ENCODE measurements at regions of chr22 and their contacts with region 1.

Region 1: DNA sequence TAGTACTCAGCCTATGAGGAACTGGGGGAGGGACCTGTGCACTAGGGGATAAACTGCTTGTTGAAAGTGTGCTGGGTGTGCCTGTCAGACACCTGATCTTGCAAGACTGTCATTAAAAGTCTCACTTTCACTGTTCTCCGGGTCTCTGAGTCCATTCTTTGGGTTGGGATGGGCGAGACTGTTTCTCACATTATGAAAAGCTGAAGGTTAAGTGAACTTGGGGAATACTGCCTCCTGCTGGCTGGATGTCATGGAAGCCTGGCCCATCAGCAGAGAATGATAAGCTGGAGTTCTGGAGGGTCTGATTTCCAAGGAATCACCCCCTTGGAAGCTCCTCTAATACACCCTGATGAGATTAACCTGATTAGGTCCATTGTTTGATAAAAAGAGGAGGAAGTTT is 9.0 kb upstream of the VPREB1 start:
- DNase-seq: peak; percentile 17
- ATAC-seq: peak; percentile 48; the same call in 2 of the 3 replicates
- H3K4me3 ChIP-seq: no peak overlapping the region
- H3K27ac ChIP-seq: no peak overlapping the region
- H3K4me1 ChIP-seq: no peaks in the 10 kb centered on the region
- H3K27me3 ChIP-seq: no peaks in the 10 kb centered on the region
- CTCF ChIP-seq: peak; percentile 51 to 55 (median 52); a peak in 5 of 6 replicates
- EP300 ChIP-seq: no peak
- POLR2A ChIP-seq: no peak
- RAD21 ChIP-seq: peak; percentile 62

Region 2: GRCh38 chr22:22201185-22201929 is 34.2 kb before region 1 on chr22:
- CTCF ChIA-PET with region 1: interaction called, 20 read pairs
- POLR2A ChIA-PET with region 1: no interaction called
- RAD21 ChIA-PET with region 1: interaction called, 12 read pairs
- SMC1A ChIA-PET with region 1: interaction called, 13 read pairs
- in situ Hi-C with region 1: no loop called
- intact Hi-C with region 1: no loop called
- DNase-seq: no peak
- ATAC-seq: peak; percentile 70
- H3K4me3 ChIP-seq: no peak overlapping the region
- H3K27ac ChIP-seq: no peak overlapping the region
- H3K4me1 ChIP-seq: peaks cover 14% of the 10 kb centered on the region
- H3K27me3 ChIP-seq: no peaks in the 10 kb centered on the region
- CTCF ChIP-seq: peak in 2 of 3 experiments; percentile 39 to 58
- EP300 ChIP-seq: no peak
- POLR2A ChIP-seq: no peak
- RAD21 ChIP-seq: peak; percentile 40

Region 3: GRCh38 chr22:22207845-22208564 is 27.6 kb before region 1 on chr22:
- CTCF ChIA-PET with region 1: interaction called, 30 read pairs
- POLR2A ChIA-PET with region 1: interaction called, 3 read pairs
- RAD21 ChIA-PET with region 1: interaction called, 31 read pairs
- SMC1A ChIA-PET with region 1: interaction called, 16 read pairs
- in situ Hi-C with region 1: no loop called
- intact Hi-C with region 1: loop called (anchors 1 kb)
- DNase-seq: peak; percentile 62
- ATAC-seq: peak; percentile 94
- H3K4me3 ChIP-seq: no peak overlapping the region
- H3K27ac ChIP-seq: peak overlapping the region; percentile 45
- H3K4me1 ChIP-seq: peaks cover 3% of the 10 kb centered on the region
- H3K27me3 ChIP-seq: no peaks in the 10 kb centered on the region
- CTCF ChIP-seq: peak; percentile 66 to 78 (median 69); a peak in 5 of 6 replicates
- EP300 ChIP-seq: no peak
- POLR2A ChIP-seq: 0 out of 2 replicates have a peak, but pooled peaks have one; percentile 35
- RAD21 ChIP-seq: peak; percentile 81